GM23248 (cell line): ENCODE measurements at regions of chr6 and their contacts with region 1.

Region 1: DNA sequence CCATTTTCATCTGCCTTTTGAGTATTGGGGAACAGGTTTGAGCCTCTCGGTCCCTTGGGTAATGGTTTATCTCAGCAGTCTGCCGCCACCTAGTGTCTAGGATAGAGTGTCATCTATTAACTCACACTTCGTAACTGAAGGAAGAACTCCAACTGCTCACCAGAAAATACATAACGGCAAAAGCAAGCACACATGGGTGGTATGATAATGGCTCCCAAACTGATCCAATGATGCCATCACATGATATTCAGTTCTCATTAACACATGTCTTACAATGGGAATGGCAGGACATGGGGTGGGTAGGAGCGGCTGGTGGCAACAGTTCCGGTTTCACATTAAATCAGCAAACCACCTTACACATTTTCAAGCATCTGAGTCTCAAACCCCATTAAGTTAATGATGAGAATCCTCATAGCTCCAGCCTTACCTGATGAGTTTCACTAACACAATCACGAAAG is 110.7 kb upstream of the PHACTR1 start:
- DNase-seq: peak; percentile 85
- H3K4me3 ChIP-seq: no peak overlapping the region
- H3K27ac ChIP-seq: no peak overlapping the region
- H3K4me1 ChIP-seq: peaks cover 32% of the 10 kb centered on the region
- H3K27me3 ChIP-seq: no peaks in the 10 kb centered on the region

Region 2: GRCh38 chr6:11585426-11586016 is 1020.4 kb before region 1 on chr6:
- in situ Hi-C with region 1: loop called (anchors 10 kb)
- DNase-seq: peak; percentile 67
- H3K4me3 ChIP-seq: no peak overlapping the region
- H3K27ac ChIP-seq: peak overlapping the region; percentile 92
- H3K4me1 ChIP-seq: peaks cover 31% of the 10 kb centered on the region
- H3K27me3 ChIP-seq: no peaks in the 10 kb centered on the region

Region 3: DNA sequence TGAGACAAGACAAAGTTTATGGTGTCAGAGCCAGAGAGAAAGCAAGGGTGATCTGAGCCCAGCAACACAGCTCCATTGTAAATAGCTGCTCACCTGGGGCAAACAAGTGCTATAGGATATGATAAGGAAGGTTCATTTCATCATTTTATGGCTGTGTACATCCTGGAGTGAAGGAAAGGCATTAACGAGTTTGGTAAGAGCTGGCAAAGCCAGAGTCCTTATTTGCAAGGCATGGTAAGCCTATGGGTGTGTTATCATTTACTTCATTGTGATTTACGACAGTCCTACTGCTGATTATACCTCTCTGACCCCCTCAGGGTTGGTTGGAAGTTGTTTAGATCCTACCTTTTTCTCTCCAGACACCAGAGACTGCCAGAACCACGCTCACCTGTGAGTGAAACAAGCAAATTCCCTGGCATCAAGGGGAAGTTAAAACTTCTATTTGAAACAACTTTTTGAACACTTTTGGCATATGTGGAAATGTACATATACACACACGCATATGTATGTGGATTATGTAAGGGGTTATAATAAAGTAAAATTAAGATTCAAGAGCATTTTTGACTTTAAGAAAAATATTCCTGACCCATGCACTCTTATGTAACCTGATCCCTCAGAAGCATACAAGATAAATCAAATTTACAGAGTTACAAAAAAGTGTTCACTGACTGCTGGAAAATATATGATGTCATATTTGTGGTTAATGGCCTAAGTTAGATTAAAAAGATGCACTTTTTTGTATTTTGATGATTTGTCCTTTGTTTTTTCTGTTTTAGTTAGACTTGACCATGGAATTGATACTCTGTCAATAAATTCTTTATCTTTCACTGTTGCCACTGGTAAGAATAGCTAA is 356.2 kb before region 1 on chr6:
- in situ Hi-C with region 1: no loop called
- DNase-seq: no peak
- H3K4me3 ChIP-seq: no peak overlapping the region
- H3K27ac ChIP-seq: no peak overlapping the region
- H3K4me1 ChIP-seq: no peaks in the 10 kb centered on the region
- H3K27me3 ChIP-seq: no peaks in the 10 kb centered on the region

Region 4: GRCh38 chr6:12289933-12290820 is 315.7 kb before region 1 on chr6 and contains the start of gene EDN1:
- in situ Hi-C with region 1: loop called (anchors 10 kb)
- DNase-seq: peak; percentile 97
- H3K4me3 ChIP-seq: peak within 1 kb of the TSS; percentile 85
- H3K27ac ChIP-seq: peak within 1 kb of the TSS; percentile 54
- H3K4me1 ChIP-seq: peaks cover 34% of the 10 kb centered on the region
- H3K27me3 ChIP-seq: no peaks in the 10 kb centered on the region
- total RNA-seq, gene EDN1: 1.8 and 6.3 TPM in 2 replicates

Region 5: GRCh38 chr6:12348530-12349511 is 257.1 kb before region 1 on chr6:
- in situ Hi-C with region 1: no loop called
- DNase-seq: peak; percentile 78
- H3K4me3 ChIP-seq: no peak overlapping the region
- H3K27ac ChIP-seq: no peak overlapping the region
- H3K4me1 ChIP-seq: peaks cover 12% of the 10 kb centered on the region
- H3K27me3 ChIP-seq: no peaks in the 10 kb centered on the region